ENCODE measurements at regions of chr21 and their contacts with region 1.

Region 1: DNA sequence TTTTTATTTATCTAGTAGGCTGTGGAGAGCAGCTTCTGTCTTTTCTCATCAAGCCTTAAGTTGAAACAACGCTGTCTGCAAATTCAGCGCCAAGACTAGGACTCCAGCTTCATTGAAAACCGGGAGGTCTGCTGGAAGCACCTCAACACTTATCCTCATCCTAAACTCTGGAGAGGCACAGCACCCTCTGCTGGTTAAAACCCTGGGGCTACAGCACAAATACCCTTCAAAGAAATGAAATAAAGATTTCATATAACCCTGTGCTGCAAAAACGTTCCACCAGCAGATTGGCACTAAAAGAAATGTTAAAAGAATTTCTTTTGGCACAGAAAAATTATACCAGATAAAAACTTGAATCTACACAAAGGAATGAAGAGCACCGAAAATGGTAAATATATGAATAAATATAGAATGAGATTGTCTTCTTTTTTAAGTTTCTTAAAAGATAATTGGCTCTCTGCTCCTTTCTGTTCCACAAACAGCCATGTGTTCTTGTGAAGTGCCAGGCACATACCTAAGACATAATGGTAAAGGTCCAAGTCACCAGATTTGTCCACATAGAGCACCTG is 227.7 kb upstream of the SAMSN1 start:
- DNase-seq: peak; percentile 88
- H3K4me3 Mint-ChIP-seq: no peak overlapping the region
- H3K27ac Mint-ChIP-seq: no peak overlapping the region
- H3K4me1 Mint-ChIP-seq: no peaks in the 10 kb centered on the region
- H3K27me3 Mint-ChIP-seq: peaks cover 10% of the 10 kb centered on the region

Region 2: DNA sequence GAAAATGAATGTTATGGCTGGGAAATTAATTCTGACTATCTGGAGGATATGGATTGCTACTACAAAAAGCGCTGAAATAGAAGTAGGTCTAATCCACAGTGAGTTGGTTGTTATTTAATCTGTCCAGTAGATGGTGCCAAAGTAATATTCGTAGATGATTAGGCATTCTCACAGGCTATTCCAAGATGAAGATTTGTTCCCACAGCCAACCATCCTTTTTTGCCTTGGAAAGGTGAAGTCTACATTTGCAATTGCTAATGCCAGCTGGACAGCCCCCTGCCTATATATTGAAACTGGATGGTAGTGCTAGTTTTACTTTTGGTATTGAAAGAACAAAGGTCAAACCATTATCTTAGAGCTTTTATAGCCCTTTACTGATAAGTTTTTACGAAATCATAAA is 514.1 kb before region 1 on chr21:
- intact Hi-C with region 1: loop called (anchors 5 kb)
- DNase-seq: no peak
- H3K4me3 Mint-ChIP-seq: no peak overlapping the region
- H3K27ac Mint-ChIP-seq: no peak overlapping the region
- H3K4me1 Mint-ChIP-seq: no peaks in the 10 kb centered on the region
- H3K27me3 Mint-ChIP-seq: peaks cover 12% of the 10 kb centered on the region

Region 3: DNA sequence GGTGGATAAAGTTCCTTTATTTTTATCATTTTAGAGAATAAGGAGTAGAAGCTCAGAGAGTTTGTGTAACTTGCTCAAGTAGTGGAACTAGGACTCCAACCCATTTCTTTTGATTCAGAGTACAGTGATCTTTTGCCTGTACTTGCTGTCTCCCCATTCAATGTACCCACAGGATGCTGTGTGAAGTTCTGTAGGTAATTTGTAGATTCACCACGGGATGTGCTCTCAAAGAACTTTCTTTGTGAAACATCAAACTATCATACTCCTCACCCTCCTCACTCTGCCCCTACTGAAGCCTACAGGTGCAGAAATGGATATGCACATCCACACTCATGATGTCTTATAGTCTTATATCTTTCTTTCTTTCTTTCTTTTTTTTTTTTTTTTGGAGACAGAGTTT is 325.1 kb before region 1 on chr21:
- intact Hi-C with region 1: loop called (anchors 5 kb)
- DNase-seq: peak; percentile 65
- H3K4me3 Mint-ChIP-seq: no peak overlapping the region
- H3K27ac Mint-ChIP-seq: peak overlapping the region; percentile 45
- H3K4me1 Mint-ChIP-seq: peaks cover 43% of the 10 kb centered on the region
- H3K27me3 Mint-ChIP-seq: no peaks in the 10 kb centered on the region